A549 (cell line): ENCODE measurements at regions of chr12 and their contacts with region 1.

Region 1: DNA sequence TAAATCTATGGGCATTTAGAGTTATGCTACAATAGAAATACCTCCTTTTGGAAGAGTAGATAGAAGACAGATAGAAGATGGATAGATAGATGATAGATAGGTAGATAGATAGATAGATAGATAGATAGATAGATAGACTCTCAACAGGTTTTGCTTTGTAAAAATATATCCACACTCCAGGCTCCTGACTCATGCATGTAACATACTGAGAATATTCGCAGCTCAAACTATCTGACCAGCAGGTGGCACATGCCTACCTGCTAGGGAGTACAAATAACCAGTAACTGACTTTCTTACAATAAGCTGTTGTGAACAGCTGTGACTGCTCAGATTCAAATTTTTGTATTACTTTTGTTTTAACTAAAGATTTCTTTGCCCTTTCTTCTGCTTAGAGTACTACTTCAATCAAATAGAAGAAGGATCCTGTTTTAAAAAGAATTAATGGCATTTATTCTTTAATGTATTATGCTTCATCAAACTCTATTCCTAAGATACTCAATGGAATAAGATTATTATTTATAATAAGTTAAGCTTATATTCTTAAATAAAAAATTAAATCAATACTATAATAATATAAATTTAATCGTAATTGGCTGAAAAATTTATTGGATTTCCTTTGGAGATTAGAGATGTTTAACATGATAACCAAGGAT is 15.8 kb upstream of the CPNE8 start:
- DNase-seq: peak; percentile 37 to 83
- ATAC-seq: peak; percentile 97
- H3K4me3 ChIP-seq: no peak overlapping the region
- H3K27ac ChIP-seq: no peak overlapping the region
- H3K4me1 ChIP-seq: no peaks in the 10 kb centered on the region
- CTCF ChIP-seq: peak; percentile 79
- EP300 ChIP-seq: no peak
- POLR2A ChIP-seq: no peak
- RAD21 ChIP-seq: peak; percentile 67 to 73

Region 2: GRCh38 chr12:38934686-38935085 is 13.5 kb after region 1 on chr12:
- CTCF ChIA-PET with region 1: interaction called, 23 read pairs
- POLR2A ChIA-PET with region 1: no interaction called
- DNase-seq: no peak
- ATAC-seq: no peak
- H3K4me3 ChIP-seq: no peak overlapping the region
- H3K27ac ChIP-seq: no peak overlapping the region
- H3K4me1 ChIP-seq: peaks cover 5% of the 10 kb centered on the region; the same call in 1 of the 3 replicates
- CTCF ChIP-seq: no peak
- EP300 ChIP-seq: no peak
- POLR2A ChIP-seq: no peak
- RAD21 ChIP-seq: no peak

Region 3: DNA sequence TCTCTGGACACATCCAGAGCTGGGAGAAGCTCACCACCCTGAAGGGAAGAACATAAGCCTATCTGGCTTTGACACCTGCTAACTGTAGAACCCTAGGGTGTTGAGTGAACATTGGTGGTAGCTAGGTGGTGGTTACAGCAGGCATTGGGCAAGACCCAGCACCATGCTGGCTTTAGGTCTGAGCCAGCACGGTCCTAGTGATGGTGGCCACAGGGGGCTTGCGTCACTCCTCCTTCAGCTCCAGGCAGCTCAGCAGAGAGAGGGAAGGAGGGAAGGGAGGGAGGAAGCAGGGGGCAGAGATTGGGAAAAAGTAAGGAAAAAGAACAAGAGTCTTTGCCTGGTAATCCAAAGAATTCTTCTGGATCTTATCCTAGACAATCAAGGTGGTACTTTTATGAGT is 99.1 kb after region 1 on chr12:
- CTCF ChIA-PET with region 1: no interaction called
- POLR2A ChIA-PET with region 1: no interaction called
- DNase-seq: no peak
- ATAC-seq: no peak
- H3K4me3 ChIP-seq: no peak overlapping the region
- H3K27ac ChIP-seq: no peak overlapping the region
- H3K4me1 ChIP-seq: no peaks in the 10 kb centered on the region
- CTCF ChIP-seq: no peak
- EP300 ChIP-seq: no peak
- POLR2A ChIP-seq: no peak
- RAD21 ChIP-seq: no peak

Region 4: GRCh38 chr12:39103552-39104165 is 182.5 kb after region 1 on chr12:
- CTCF ChIA-PET with region 1: interaction called, 30 read pairs
- POLR2A ChIA-PET with region 1: no interaction called
- DNase-seq: peak; percentile 64 to 75
- ATAC-seq: peak; percentile 96 to 99
- H3K4me3 ChIP-seq: no peak overlapping the region
- H3K27ac ChIP-seq: no peak overlapping the region
- H3K4me1 ChIP-seq: no peaks in the 10 kb centered on the region
- CTCF ChIP-seq: peak; percentile 80
- EP300 ChIP-seq: no peak
- POLR2A ChIP-seq: no peak
- RAD21 ChIP-seq: peak; percentile 77 to 89